Esophagus muscularis mucosa (tissue), 4 donors: ENCODE measurements at regions of chr19 and their contacts with region 1.

Region 1: GRCh38 chr19:32570081-32570785 is 10.8 kb upstream of the PDCD5 start:
- DNase-seq: no peak
- H3K4me3 ChIP-seq: no peak overlapping the region
- H3K27ac ChIP-seq: no peak overlapping the region
- H3K4me1 ChIP-seq: no peaks in the 10 kb centered on the region
- H3K27me3 ChIP-seq: peaks cover 0 to 44% (median 0%) of the 10 kb centered on the region in 4 donors
- CTCF ChIP-seq: peak; percentile 37 to 56 (median 50)
- EP300 ChIP-seq: no peak
- POLR2A ChIP-seq: no peak

Region 2: GRCh38 chr19:32287811-32288227 is 282.4 kb before region 1 on chr19:
- intact Hi-C with region 1: loop called (anchors 5 kb)
- DNase-seq: peak; percentile 90
- H3K4me3 ChIP-seq: peak overlapping the region in 1 of 4 donors; percentile 14
- H3K27ac ChIP-seq: no peak overlapping the region
- H3K4me1 ChIP-seq: peaks cover 0 to 11% (median 9%) of the 10 kb centered on the region in 4 donors
- H3K27me3 ChIP-seq: peaks cover 0 to 18% (median 0%) of the 10 kb centered on the region in 4 donors
- CTCF ChIP-seq: peak; percentile 36 to 52 (median 39)
- EP300 ChIP-seq: no peak
- POLR2A ChIP-seq: no peak

Region 3: DNA sequence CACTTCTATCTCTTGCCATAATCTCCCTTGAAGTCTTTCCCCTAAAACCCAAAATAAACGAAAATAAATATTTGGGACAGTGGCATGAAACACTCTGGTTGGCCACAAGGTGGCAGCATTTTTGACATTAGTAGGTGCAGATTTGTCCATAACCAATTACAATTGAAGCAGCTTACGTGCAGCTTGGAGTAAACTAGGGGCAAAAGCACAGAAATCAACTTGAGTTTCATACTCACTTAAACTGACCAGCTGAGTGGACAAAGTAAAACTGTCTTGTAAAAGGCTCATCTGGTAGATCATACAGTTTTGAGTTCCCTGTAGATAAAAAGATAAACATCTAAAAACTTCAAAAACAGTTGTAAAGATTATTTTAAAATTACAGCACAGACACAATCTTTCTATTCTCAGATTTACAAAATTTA is 29.5 kb after region 1 on chr19:
- intact Hi-C with region 1: no loop called
- DNase-seq: no peak
- H3K4me3 ChIP-seq: no peak overlapping the region
- H3K27ac ChIP-seq: no peak overlapping the region
- H3K4me1 ChIP-seq: no peaks in the 10 kb centered on the region
- H3K27me3 ChIP-seq: no peaks in the 10 kb centered on the region
- CTCF ChIP-seq: peak; percentile 73 to 83 (median 75)
- EP300 ChIP-seq: no peak
- POLR2A ChIP-seq: no peak